CD4-positive, alpha-beta T cell (primary cell): ENCODE measurements at regions of chr7 and their contacts with region 1.

Region 1: GRCh38 chr7:152463709-152464311 is 28.0 kb upstream of the KMT2C start:
- DNase-seq: peak; percentile 99 to 100 (median 100)
- ATAC-seq: peak; percentile 91
- H3K4me3 ChIP-seq: peak overlapping the region; percentile 93
- H3K4me3 Mint-ChIP-seq: peak overlapping the region; percentile 93
- H3K27ac ChIP-seq: peak overlapping the region; percentile 76 to 93
- H3K27ac Mint-ChIP-seq: peak overlapping the region; percentile 74
- H3K4me1 ChIP-seq: peaks cover 10% of the 10 kb centered on the region
- H3K4me1 Mint-ChIP-seq: peaks cover 6% of the 10 kb centered on the region
- H3K27me3 ChIP-seq: no peaks in the 10 kb centered on the region
- H3K27me3 Mint-ChIP-seq: no peaks in the 10 kb centered on the region
- CTCF ChIP-seq: no peak

Region 2: GRCh38 chr7:152424348-152425108 is 39.3 kb before region 1 on chr7:
- CTCF ChIA-PET with region 1: interaction called, 4 read pairs
- POLR2A ChIA-PET with region 1: interaction called, 3 read pairs
- intact Hi-C with region 1: loop called (anchors 5 kb)
- DNase-seq: no peak
- ATAC-seq: no peak
- H3K4me3 ChIP-seq: no peak overlapping the region
- H3K4me3 Mint-ChIP-seq: no peak overlapping the region
- H3K27ac ChIP-seq: no peak overlapping the region
- H3K27ac Mint-ChIP-seq: no peak overlapping the region
- H3K4me1 ChIP-seq: peaks cover 32% of the 10 kb centered on the region
- H3K4me1 Mint-ChIP-seq: peaks cover 75% of the 10 kb centered on the region
- H3K27me3 ChIP-seq: no peaks in the 10 kb centered on the region
- H3K27me3 Mint-ChIP-seq: no peaks in the 10 kb centered on the region
- CTCF ChIP-seq: no peak

Region 3: DNA sequence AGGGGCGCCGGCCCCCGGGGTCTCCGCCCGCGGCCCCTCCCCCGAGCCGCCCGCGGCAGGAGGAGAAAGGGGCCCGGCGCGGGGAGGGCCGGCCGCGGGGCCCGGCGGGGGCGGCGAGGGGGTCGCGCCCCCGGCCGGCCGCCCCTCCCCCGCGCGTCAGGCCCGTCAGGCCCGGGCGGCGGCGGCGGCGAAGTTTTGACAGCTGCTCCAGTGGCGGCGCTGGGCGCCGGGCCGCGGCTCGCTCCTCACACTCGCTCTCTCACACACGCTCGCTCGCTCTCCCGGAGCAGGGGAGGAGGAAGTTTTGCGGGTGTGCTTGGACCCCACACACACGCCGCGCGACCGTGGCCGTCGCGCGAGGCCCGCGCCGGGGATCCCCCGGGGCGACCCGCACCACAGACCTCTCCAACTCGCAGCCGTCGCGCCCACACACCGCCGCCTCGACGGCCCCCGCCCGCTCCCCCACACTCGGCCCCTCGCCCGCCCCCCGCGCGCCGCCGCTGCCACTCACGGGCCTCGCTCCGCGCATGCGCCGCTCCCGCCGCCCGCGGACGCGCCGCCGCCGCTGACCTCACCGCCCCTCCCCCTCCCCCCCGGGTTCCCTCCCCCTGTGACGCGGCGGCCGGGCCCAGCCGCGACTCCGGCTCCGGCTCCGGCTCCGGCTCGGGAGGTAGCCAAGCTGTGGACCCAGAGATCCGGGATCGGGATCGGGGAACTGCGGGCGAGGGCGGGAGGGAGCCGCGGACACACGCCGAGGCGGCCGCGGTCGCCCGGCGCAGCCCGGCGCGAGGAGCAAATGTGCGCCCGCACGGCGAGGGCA is 27.5 kb before region 1 on chr7:
- CTCF ChIA-PET with region 1: interaction called, 3 read pairs
- POLR2A ChIA-PET with region 1: interaction called, 31 read pairs
- intact Hi-C with region 1: loop called (anchors 1 to 2 kb)
- DNase-seq: peak; percentile 82 to 97 (median 88)
- ATAC-seq: peak; percentile 66
- H3K4me3 ChIP-seq: peak overlapping the region; percentile 62
- H3K4me3 Mint-ChIP-seq: peak overlapping the region; percentile 91
- H3K27ac ChIP-seq: peak overlapping the region; percentile 86 to 92
- H3K27ac Mint-ChIP-seq: peak overlapping the region; percentile 93
- H3K4me1 ChIP-seq: peaks cover 5% of the 10 kb centered on the region
- H3K4me1 Mint-ChIP-seq: peaks cover 29% of the 10 kb centered on the region
- H3K27me3 ChIP-seq: no peaks in the 10 kb centered on the region
- H3K27me3 Mint-ChIP-seq: no peaks in the 10 kb centered on the region
- CTCF ChIP-seq: no peak

Region 4: DNA sequence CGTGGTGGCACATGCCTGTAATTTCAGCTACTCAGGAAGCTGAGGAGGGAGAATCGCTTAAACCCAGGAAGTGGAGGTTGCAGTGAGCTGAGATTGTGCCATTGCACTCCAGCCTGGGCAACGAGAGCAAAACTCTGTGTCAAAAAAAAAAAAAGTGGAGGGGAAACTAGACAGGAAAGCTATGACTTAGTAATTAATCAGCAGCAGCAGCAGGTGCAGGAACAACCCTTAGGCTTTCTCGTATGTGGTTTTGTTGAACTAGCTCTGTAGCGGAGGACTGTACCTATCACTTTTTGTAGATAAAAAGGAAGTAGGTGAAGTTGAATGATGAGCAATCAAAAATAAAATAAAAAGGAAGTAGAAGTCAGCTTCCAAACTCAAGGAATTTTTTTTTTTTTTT is 48.9 kb after region 1 on chr7:
- CTCF ChIA-PET with region 1: no interaction called
- POLR2A ChIA-PET with region 1: interaction called, 10 read pairs
- intact Hi-C with region 1: no loop called
- DNase-seq: peak in 7 of 14 experiments; percentile 3 to 67 (median 49)
- ATAC-seq: peak; percentile 90
- H3K4me3 ChIP-seq: peak overlapping the region; percentile 38
- H3K4me3 Mint-ChIP-seq: peak overlapping the region; percentile 52
- H3K27ac ChIP-seq: no peak overlapping the region
- H3K27ac Mint-ChIP-seq: peak overlapping the region; percentile 9
- H3K4me1 ChIP-seq: peaks cover 17% of the 10 kb centered on the region
- H3K4me1 Mint-ChIP-seq: peaks cover 10% of the 10 kb centered on the region
- H3K27me3 ChIP-seq: no peaks in the 10 kb centered on the region
- H3K27me3 Mint-ChIP-seq: no peaks in the 10 kb centered on the region
- CTCF ChIP-seq: no peak

Region 5: GRCh38 chr7:152759949-152760853 is 296.4 kb after region 1 on chr7:
- CTCF ChIA-PET with region 1: no interaction called
- POLR2A ChIA-PET with region 1: no interaction called
- intact Hi-C with region 1: loop called in 1 of 2 experiments (anchors 5 kb)
- DNase-seq: peak in 10 of 14 experiments; percentile 1 to 50 (median 7)
- ATAC-seq: peak; percentile 23
- H3K4me3 ChIP-seq: peak overlapping the region; percentile 74
- H3K4me3 Mint-ChIP-seq: peak overlapping the region; percentile 92
- H3K27ac ChIP-seq: peak overlapping the region in 1 of 2 donors; percentile 70
- H3K27ac Mint-ChIP-seq: peak overlapping the region; percentile 78
- H3K4me1 ChIP-seq: peaks cover 16% of the 10 kb centered on the region
- H3K4me1 Mint-ChIP-seq: peaks cover 21% of the 10 kb centered on the region
- H3K27me3 ChIP-seq: no peaks in the 10 kb centered on the region
- H3K27me3 Mint-ChIP-seq: no peaks in the 10 kb centered on the region
- CTCF ChIP-seq: no peak